Activated CD8-positive, alpha-beta T cell treated with anti-CD3 and anti-CD28 coated beads, Interleukin-2, amount 10 ng/mL, durations not matched to agents 7 days and 5 days (primary cell): ENCODE measurements at regions of chr11 and their contacts with region 1.

Region 1: GRCh38 chr11:82867495-82868082 is 32.6 kb downstream of the PRCP start:
- DNase-seq: peak; percentile 87
- ATAC-seq: peak; percentile 68
- H3K4me3 Mint-ChIP-seq: peak overlapping the region; percentile 48
- H3K27ac Mint-ChIP-seq: peak overlapping the region; percentile 41
- H3K4me1 Mint-ChIP-seq: peaks cover 14% of the 10 kb centered on the region
- H3K27me3 Mint-ChIP-seq: no peaks in the 10 kb centered on the region

Region 2: GRCh38 chr11:82733444-82734119 is 134.0 kb before region 1 on chr11 and contains the start of gene FAM181B:
- CTCF ChIA-PET with region 1: no interaction called
- POLR2A ChIA-PET with region 1: no interaction called
- DNase-seq: peak; percentile 42
- ATAC-seq: peak; percentile 81
- H3K4me3 Mint-ChIP-seq: peak within 1 kb of the TSS; percentile 56
- H3K27ac Mint-ChIP-seq: no peak within 1 kb of the TSS
- H3K4me1 Mint-ChIP-seq: no peaks in the 10 kb centered on the region
- H3K27me3 Mint-ChIP-seq: peaks cover 61% of the 10 kb centered on the region
- total RNA-seq, gene FAM181B: not detected

Region 3: GRCh38 chr11:82811369-82811768 is 56.2 kb before region 1 on chr11:
- CTCF ChIA-PET with region 1: no interaction called
- POLR2A ChIA-PET with region 1: no interaction called
- DNase-seq: no peak
- ATAC-seq: no peak
- H3K4me3 Mint-ChIP-seq: no peak overlapping the region
- H3K27ac Mint-ChIP-seq: no peak overlapping the region
- H3K4me1 Mint-ChIP-seq: no peaks in the 10 kb centered on the region
- H3K27me3 Mint-ChIP-seq: peaks cover 30% of the 10 kb centered on the region

Region 4: DNA sequence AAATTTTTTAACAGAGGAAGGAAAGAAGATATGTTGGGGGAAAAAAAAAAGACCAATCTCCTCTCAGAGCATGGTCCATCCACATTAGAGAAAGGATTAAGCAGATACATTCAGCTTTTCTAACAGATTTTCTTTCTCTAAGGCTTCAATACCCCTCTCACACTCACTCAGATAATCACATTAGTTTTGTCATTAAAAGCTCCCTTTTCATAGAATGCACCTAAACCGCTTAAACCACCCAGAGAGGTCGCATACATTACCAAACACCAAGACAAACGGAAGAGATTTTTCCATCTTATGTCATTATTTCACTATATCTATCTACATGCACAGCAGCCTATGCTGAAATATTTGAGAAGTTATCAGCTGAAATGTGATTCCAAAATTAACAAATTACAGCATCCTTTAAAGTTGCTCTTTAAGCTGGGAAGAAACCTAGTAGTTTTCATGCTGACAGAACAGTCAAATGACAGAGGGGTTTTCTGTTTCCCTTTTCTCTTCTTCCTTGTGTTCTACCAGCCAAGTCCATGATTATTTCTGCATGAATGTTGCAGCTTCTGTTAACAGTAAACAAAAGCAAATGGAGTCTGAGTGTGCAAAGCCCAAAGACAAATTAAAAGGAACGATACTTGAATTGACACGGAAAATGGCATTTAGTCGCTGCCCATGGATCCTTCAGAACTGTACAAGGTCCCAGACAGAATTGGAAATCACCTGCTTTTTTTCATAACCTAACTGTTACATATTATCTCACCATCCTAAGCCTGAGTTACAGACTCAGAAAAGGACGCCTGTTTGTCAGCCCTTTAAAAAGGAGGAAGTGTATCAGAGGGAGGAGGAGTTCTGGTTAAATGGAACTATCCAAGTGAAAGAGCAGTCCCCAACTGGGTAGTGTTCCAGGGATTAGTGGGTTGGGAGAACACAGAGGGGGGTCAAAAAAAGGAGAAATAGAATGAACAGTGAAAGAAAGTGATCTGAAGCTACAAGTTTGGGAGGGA is 21.9 kb before region 1 on chr11:
- CTCF ChIA-PET with region 1: interaction called, 21 read pairs
- POLR2A ChIA-PET with region 1: no interaction called
- DNase-seq: no peak
- ATAC-seq: no peak
- H3K4me3 Mint-ChIP-seq: no peak overlapping the region
- H3K27ac Mint-ChIP-seq: no peak overlapping the region
- H3K4me1 Mint-ChIP-seq: no peaks in the 10 kb centered on the region
- H3K27me3 Mint-ChIP-seq: no peaks in the 10 kb centered on the region

Region 5: DNA sequence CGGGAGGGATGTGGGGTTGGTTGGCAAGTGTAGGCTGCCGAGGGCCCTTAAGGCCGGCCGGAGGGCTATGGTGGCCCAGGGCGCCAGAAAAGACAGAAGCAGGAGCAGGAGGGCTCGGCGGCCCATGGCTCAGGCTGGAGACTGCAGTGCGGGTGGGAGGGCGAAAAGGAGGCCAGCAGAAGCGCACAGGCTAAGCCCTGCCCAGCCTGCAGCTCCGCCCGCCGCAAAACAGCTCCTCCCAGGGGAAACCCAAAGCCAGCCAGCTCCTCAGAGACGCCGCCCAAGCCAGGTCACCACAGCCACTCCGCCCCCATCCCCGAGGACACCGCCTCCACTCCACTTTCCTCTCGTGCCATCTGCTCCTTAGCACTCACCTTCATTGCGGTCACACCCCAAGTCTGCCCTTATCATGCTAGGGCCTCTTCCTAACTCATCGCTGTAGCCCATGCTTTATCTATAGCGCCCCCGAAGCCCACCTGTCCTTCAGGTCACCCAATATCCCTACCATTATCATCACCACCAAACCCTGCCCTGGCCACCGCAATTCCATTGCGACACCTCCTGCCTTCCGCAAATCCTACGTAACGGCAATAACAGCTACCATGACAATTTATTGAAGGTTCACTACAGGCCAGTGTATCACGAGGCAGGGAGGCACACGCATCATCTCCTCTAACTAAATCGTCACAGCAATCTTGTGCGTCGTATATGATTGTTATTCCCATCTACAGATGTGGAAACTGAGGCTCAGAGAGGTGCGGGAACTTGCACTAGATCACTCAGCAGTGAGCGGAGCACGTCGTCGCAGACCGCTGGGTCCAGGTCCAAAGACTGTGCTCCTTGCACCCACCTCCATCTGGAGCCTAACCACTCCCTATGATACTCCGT is 32.9 kb after region 1 on chr11 and contains the start of gene PRCP:
- CTCF ChIA-PET with region 1: interaction called, 123 read pairs
- POLR2A ChIA-PET with region 1: interaction called, 12 read pairs
- DNase-seq: peak; percentile 96
- ATAC-seq: peak; percentile 83
- H3K4me3 Mint-ChIP-seq: peak within 1 kb of the TSS; percentile 97
- H3K27ac Mint-ChIP-seq: peak within 1 kb of the TSS; percentile 99
- H3K4me1 Mint-ChIP-seq: peaks cover 48% of the 10 kb centered on the region
- H3K27me3 Mint-ChIP-seq: no peaks in the 10 kb centered on the region
- total RNA-seq, gene PRCP: 17.2 to 18.2 TPM

Region 6: DNA sequence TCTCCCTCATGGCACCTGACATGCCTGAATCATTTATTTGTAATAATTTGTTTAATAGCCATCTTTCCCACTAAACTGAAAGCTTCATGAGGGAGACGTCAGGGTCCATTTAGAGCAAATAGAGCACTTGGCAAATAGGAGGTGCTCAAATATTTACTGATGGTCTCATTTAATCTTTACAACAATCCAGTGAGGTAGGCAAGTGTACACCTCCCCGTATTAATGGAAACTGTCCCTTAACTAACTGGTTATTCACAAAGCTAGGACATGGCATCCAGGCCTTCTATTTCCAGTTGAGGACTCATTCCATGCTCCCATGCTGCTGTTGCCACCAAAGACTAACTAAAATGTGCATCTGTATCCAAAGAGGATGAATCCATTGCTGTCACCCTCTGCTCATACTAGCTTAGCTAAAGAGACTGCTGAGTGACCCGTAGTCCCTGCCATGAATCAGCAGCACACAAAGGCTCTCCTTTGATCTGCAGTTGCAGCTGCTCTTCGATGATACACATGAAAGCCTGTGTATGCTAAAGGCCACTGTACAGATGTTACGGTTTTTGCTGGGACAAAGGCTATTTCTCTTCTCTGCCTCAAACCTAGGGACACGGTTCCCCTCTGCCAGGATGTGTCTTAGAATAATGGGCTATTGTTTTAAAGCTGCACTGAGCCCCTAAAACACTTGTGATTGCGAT is 121.5 kb after region 1 on chr11:
- CTCF ChIA-PET with region 1: interaction called, 12 read pairs
- POLR2A ChIA-PET with region 1: no interaction called
- DNase-seq: no peak
- ATAC-seq: no peak
- H3K4me3 Mint-ChIP-seq: no peak overlapping the region
- H3K27ac Mint-ChIP-seq: no peak overlapping the region
- H3K4me1 Mint-ChIP-seq: peaks cover under 1% of the 10 kb centered on the region
- H3K27me3 Mint-ChIP-seq: no peaks in the 10 kb centered on the region

Region 7: GRCh38 chr11:83025267-83025720 is 157.7 kb after region 1 on chr11:
- CTCF ChIA-PET with region 1: no interaction called
- POLR2A ChIA-PET with region 1: no interaction called
- DNase-seq: no peak
- ATAC-seq: no peak
- H3K4me3 Mint-ChIP-seq: no peak overlapping the region
- H3K27ac Mint-ChIP-seq: no peak overlapping the region
- H3K4me1 Mint-ChIP-seq: peaks cover 26% of the 10 kb centered on the region
- H3K27me3 Mint-ChIP-seq: no peaks in the 10 kb centered on the region

Region 8: GRCh38 chr11:83249972-83250593 is 382.5 kb after region 1 on chr11:
- CTCF ChIA-PET with region 1: interaction called, 24 read pairs
- POLR2A ChIA-PET with region 1: no interaction called
- DNase-seq: peak; percentile 33
- ATAC-seq: no peak
- H3K4me3 Mint-ChIP-seq: no peak overlapping the region
- H3K27ac Mint-ChIP-seq: no peak overlapping the region
- H3K4me1 Mint-ChIP-seq: peaks cover 7% of the 10 kb centered on the region
- H3K27me3 Mint-ChIP-seq: no peaks in the 10 kb centered on the region